IMR-90 (cell line): ENCODE measurements at regions of chr4 and their contacts with region 1.

Region 1: DNA sequence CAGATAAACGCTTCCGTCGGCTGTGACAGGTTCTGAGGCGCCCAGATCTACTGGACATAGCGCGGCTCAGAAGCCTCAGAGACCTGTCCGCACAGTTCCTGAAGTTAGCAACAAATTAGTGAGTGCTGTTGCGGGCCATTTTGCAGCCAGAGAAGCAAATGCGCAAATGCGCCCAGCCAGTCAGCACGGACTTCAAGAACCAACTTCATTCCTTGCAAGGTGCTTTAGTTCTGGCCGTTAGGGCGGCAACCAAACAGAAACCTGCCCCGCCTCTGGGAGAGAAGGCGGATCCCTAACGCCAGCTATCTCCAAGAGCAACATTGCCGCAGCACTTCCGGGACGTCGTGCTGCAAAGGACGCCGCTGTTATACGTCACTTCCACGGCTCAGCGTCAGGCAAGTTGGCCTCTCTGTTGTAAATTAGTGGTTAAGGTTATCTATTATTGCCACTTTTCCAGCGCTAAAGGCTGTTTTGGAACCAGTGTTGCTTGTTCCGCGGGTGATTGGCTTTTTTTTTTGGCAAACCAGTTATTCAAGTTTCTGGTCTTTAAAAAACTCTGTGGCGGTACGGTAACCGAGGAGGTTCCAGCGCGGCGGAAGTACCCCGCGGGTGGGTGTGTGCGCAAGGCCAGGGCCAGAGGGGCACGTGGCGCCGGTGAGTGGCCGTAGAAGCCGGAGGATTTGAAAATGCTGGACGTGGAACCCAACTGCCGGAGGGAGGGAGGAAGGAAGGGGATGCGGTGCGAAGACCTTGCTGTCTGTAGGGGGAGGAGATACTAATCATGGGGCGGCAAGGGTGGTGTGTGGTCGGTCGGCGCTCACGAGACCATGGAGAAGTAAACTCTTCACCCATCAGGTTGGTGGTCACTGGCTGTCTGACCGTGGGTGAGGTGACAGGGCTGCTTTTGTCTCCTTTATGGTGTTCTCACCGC is at the start of gene GAR1:
- DNase-seq: peak; percentile 92
- ATAC-seq: peak; percentile 95
- H3K4me3 ChIP-seq: peak within 1 kb of the TSS; percentile 61
- H3K27ac ChIP-seq: peak within 1 kb of the TSS; percentile 78
- H3K4me1 ChIP-seq: no peaks in the 10 kb centered on the region
- H3K27me3 ChIP-seq: no peaks in the 10 kb centered on the region
- CTCF ChIP-seq: no peak
- POLR2A ChIP-seq: 0 out of 2 replicates have a peak, but pooled peaks have one; percentile 32
- RAD21 ChIP-seq: no peak
- total RNA-seq, gene GAR1: 1.1 and 4.4 TPM in 2 replicates

Region 2: GRCh38 chr4:109548655-109549054 is 266.8 kb before region 1 on chr4:
- CTCF ChIA-PET with region 1: no interaction called
- POLR2A ChIA-PET with region 1: no interaction called
- dilution Hi-C with region 1: no loop called
- in situ Hi-C with region 1: loop called (anchors 10 kb)
- intact Hi-C with region 1: no loop called
- DNase-seq: peak; percentile 92
- ATAC-seq: peak; percentile 88
- H3K4me3 ChIP-seq: no peak overlapping the region
- H3K27ac ChIP-seq: no peak overlapping the region
- H3K4me1 ChIP-seq: peaks cover 2% of the 10 kb centered on the region; the same call in 1 of the 2 replicates
- H3K27me3 ChIP-seq: no peaks in the 10 kb centered on the region
- CTCF ChIP-seq: no peak
- POLR2A ChIP-seq: no peak
- RAD21 ChIP-seq: no peak

Region 3: DNA sequence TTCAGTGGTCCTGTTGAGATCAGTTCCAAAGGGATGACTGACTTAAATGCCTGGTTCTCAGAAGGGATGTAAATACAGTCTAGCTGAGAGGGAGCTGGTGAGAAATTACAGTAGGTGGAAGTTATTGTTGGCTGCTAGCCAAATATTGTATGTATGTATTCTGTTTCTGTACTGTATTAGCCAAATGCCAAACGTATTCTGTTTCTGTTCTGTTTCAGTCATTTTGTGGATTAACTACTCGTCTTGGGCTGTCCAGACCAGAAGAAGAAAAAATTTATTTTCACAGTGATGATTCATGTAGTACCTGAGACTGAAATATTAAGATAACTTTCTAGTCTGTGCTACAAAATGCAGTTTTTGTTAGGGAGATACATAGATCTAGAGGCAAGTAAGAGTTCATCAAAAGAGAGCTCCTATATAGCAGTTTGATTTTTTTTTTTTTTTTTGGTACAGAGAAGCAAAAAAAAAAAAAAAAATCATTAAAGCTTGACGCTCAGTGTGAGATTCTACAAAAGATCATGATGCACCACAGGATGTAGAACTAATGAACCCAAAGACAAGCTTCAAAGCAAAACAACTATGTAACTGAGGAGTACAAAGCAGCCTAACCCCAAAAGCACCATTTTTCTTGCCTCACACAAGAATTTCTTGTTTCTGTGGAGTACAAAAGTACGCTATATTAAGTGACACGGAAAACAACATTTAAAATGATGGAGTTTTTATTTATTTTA is 167.0 kb before region 1 on chr4:
- CTCF ChIA-PET with region 1: no interaction called
- POLR2A ChIA-PET with region 1: no interaction called
- dilution Hi-C with region 1: no loop called
- in situ Hi-C with region 1: no loop called
- intact Hi-C with region 1: no loop called
- DNase-seq: no peak
- ATAC-seq: no peak
- H3K4me3 ChIP-seq: no peak overlapping the region
- H3K27ac ChIP-seq: no peak overlapping the region
- H3K4me1 ChIP-seq: no peaks in the 10 kb centered on the region
- H3K27me3 ChIP-seq: no peaks in the 10 kb centered on the region
- CTCF ChIP-seq: no peak
- POLR2A ChIP-seq: no peak
- RAD21 ChIP-seq: no peak

Region 4: GRCh38 chr4:109665783-109666485 is 149.5 kb before region 1 on chr4:
- CTCF ChIA-PET with region 1: no interaction called
- POLR2A ChIA-PET with region 1: no interaction called
- dilution Hi-C with region 1: no loop called
- in situ Hi-C with region 1: no loop called
- intact Hi-C with region 1: no loop called
- DNase-seq: no peak
- ATAC-seq: no peak
- H3K4me3 ChIP-seq: no peak overlapping the region
- H3K27ac ChIP-seq: no peak overlapping the region
- H3K4me1 ChIP-seq: no peaks in the 10 kb centered on the region
- H3K27me3 ChIP-seq: no peaks in the 10 kb centered on the region
- CTCF ChIP-seq: no peak
- POLR2A ChIP-seq: no peak
- RAD21 ChIP-seq: no peak

Region 5: GRCh38 chr4:109729718-109730618 is 85.4 kb before region 1 on chr4 and contains the start of gene PLA2G12A:
- CTCF ChIA-PET with region 1: no interaction called
- POLR2A ChIA-PET with region 1: no interaction called
- dilution Hi-C with region 1: no loop called
- in situ Hi-C with region 1: no loop called
- intact Hi-C with region 1: loop called (anchors 2 kb)
- DNase-seq: peak; percentile 56
- ATAC-seq: peak; percentile 96
- H3K4me3 ChIP-seq: peak within 1 kb of the TSS; percentile 93
- H3K27ac ChIP-seq: peak within 1 kb of the TSS; percentile 42
- H3K4me1 ChIP-seq: peaks cover 5% of the 10 kb centered on the region; the same call in 1 of the 2 replicates
- H3K27me3 ChIP-seq: no peaks in the 10 kb centered on the region
- CTCF ChIP-seq: no peak
- POLR2A ChIP-seq: no peak
- RAD21 ChIP-seq: no peak
- total RNA-seq, gene PLA2G12A: 8.9 and 17.4 TPM in 2 replicates